Prostate gland (tissue), 2 donors: ENCODE measurements at regions of chr3 and their contacts with region 1.

Region 1: DNA sequence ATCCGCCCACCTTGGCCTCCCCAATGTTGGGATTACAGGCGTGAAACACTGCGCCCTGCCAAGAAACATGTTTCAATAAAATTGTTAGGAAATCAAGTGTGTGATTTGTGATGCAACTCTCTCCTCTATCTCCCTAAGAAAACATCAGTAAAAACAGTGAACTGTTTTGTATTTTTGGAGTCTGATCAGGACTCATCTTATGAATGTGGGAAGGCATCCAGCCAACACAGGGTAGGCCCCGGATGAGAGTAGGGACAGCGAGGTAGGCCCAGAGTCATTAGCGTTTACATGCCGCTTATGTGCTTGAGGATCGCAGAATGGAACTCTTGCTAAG is 884 bp upstream of the GLYCTK start:
- DNase-seq: peak; percentile 58
- H3K4me3 ChIP-seq: peak overlapping the region; percentile 91 to 95
- H3K27ac ChIP-seq: peak overlapping the region; percentile 99 to 100
- H3K4me1 ChIP-seq: no peaks in the 10 kb centered on the region
- H3K27me3 ChIP-seq: no peaks in the 10 kb centered on the region
- CTCF ChIP-seq: no peak
- POLR2A ChIP-seq: no peak

Region 2: GRCh38 chr3:52238761-52239701 is 47.7 kb before region 1 on chr3 and contains the start of gene TWF2:
- intact Hi-C with region 1: loop called (anchors 5 kb)
- DNase-seq: peak; percentile 66
- H3K4me3 ChIP-seq: peak within 1 kb of the TSS; percentile 82 to 94
- H3K27ac ChIP-seq: peak within 1 kb of the TSS; percentile 83 to 90
- H3K4me1 ChIP-seq: peaks cover 18% of the 10 kb centered on the region
- H3K27me3 ChIP-seq: no peaks in the 10 kb centered on the region
- CTCF ChIP-seq: peak in 2 of 4 experiments; percentile 57 to 63
- POLR2A ChIP-seq: peak; percentile 88
- total RNA-seq, gene TWF2: 60.9 to 65.5 TPM